Naive thymus-derived CD4-positive, alpha-beta T cell (primary cell): ENCODE measurements at regions of chr14 and their contacts with region 1.

Region 1: DNA sequence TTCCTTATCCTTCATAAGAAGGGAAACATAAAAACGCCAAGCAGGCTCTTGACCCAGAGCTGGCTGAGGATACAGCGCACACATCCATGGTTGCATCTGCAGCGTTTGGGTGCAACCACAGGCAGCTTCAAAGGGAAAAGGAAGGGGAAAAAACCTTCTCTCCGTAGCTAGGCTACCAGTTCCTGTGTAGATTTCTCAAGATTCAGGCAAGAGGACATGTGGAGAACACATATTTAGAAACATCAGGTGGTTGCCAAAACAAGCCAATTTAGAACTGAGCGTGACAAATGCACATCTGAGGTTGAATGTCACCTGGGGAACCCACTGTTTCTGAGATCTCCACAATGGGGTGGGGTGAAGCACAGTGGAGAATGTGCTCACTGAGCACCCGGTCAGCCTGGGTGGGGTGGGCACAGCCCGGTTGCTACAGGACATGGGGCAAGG is 78.3 kb upstream of the BDKRB2 start:
- DNase-seq: peak in 8 of 9 donors; percentile 33 to 92 (median 82)
- ATAC-seq: peak; percentile 93
- H3K4me3 ChIP-seq: peak overlapping the region; percentile 5
- H3K4me3 Mint-ChIP-seq: peak overlapping the region; percentile 60 to 92 (median 80)
- H3K27ac ChIP-seq: peak overlapping the region; percentile 80
- H3K27ac Mint-ChIP-seq: peak overlapping the region; percentile 96 to 100 (median 99)
- H3K4me1 ChIP-seq: peaks cover 15 to 32% of the 10 kb centered on the region in 2 donors
- H3K4me1 Mint-ChIP-seq: peaks cover 11 to 58% (median 49%) of the 10 kb centered on the region in 7 donors
- H3K27me3 ChIP-seq: no peaks in the 10 kb centered on the region
- H3K27me3 Mint-ChIP-seq: no peaks in the 10 kb centered on the region

Region 2: GRCh38 chr14:96176811-96177603 is 50.6 kb after region 1 on chr14:
- CTCF ChIA-PET with region 1: interaction called, 4 read pairs
- POLR2A ChIA-PET with region 1: interaction called, 5 read pairs
- intact Hi-C with region 1: loop called in 1 of 2 experiments (anchors 5 kb)
- DNase-seq: no peak
- ATAC-seq: no peak
- H3K4me3 ChIP-seq: no peak overlapping the region
- H3K4me3 Mint-ChIP-seq: no peak overlapping the region
- H3K27ac ChIP-seq: no peak overlapping the region
- H3K27ac Mint-ChIP-seq: peak overlapping the region in 1 of 9 donors; percentile 29
- H3K4me1 ChIP-seq: peaks cover 0 to 3% of the 10 kb centered on the region in 2 donors
- H3K4me1 Mint-ChIP-seq: peaks cover 3 to 29% (median 17%) of the 10 kb centered on the region in 7 donors
- H3K27me3 ChIP-seq: no peaks in the 10 kb centered on the region
- H3K27me3 Mint-ChIP-seq: peaks cover 0 to 14% (median 8%) of the 10 kb centered on the region in 5 donors

Region 3: DNA sequence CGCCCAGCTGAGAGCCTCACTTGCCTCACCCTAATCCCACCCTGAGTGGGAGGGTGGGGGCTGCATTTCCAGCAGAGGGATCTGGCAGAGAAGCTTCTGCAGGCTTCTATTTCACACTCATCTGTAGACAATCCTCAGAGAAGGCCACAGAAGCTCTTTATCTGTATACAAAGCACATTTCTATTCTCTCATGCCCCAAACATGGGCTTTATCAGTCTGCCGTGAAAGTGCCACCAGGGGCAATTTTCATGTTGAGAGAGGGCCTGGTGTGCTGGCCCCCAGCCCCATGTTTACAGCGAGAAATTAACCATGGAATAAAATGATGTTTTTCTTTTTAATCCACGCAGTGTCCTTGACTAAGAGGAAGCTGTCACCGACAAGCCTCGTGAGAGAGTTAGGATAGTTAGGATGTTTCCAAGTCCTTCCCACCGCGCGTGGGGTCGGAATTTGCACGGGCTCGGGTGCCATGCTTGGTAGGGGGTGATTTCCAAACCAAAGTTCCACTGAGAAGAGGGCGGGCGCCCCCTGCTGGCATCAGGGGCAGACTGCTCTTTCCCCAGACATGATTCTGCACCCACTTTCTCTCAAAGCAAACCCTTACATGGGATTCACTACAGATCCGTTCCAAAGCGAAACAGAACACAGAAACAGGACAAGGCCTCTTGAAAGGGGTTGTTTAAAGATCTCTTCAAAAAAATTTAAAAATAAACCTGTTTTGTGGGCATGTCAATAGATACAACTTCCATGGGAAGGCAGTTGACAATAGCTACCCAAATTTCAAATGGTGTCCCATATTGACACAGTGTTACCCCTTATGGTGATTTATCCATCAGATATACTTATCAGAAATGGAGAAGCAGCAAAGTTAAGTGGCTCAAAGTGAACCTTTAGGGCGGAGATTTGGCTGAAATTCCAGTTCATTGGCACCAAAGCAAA is 149.1 kb after region 1 on chr14:
- CTCF ChIA-PET with region 1: interaction called, 7 read pairs
- POLR2A ChIA-PET with region 1: no interaction called
- intact Hi-C with region 1: loop called in 1 of 2 experiments (anchors 1 kb)
- DNase-seq: peak; percentile 41 to 73 (median 67)
- ATAC-seq: peak; percentile 66
- H3K4me3 ChIP-seq: no peak overlapping the region
- H3K4me3 Mint-ChIP-seq: no peak overlapping the region
- H3K27ac ChIP-seq: no peak overlapping the region
- H3K27ac Mint-ChIP-seq: peak overlapping the region in 1 of 9 donors; percentile 9
- H3K4me1 ChIP-seq: peaks cover 0 to 2% of the 10 kb centered on the region in 2 donors
- H3K4me1 Mint-ChIP-seq: peaks cover 0 to 5% (median 0%) of the 10 kb centered on the region in 7 donors
- H3K27me3 ChIP-seq: no peaks in the 10 kb centered on the region
- H3K27me3 Mint-ChIP-seq: no peaks in the 10 kb centered on the region

Region 4: GRCh38 chr14:96391293-96392118 is 265.1 kb after region 1 on chr14:
- CTCF ChIA-PET with region 1: no interaction called
- POLR2A ChIA-PET with region 1: no interaction called
- intact Hi-C with region 1: loop called in 1 of 2 experiments (anchors 1 kb)
- DNase-seq: peak; percentile 97 to 100 (median 99)
- ATAC-seq: peak; percentile 97
- H3K4me3 ChIP-seq: peak overlapping the region; percentile 90
- H3K4me3 Mint-ChIP-seq: peak overlapping the region; percentile 85 to 94 (median 92)
- H3K27ac ChIP-seq: peak overlapping the region; percentile 55
- H3K27ac Mint-ChIP-seq: peak overlapping the region in 8 of 9 donors; percentile 61 to 93 (median 86)
- H3K4me1 ChIP-seq: peaks cover 7 to 11% of the 10 kb centered on the region in 2 donors
- H3K4me1 Mint-ChIP-seq: peaks cover 0 to 7% (median 0%) of the 10 kb centered on the region in 7 donors
- H3K27me3 ChIP-seq: no peaks in the 10 kb centered on the region
- H3K27me3 Mint-ChIP-seq: peaks cover 0 to 14% (median 0%) of the 10 kb centered on the region in 5 donors